Activated B cell treated with CpG ODN at 0.5 μM for 24 hours (primary cell): ENCODE measurements at regions of chr9 and their contacts with region 1.

Region 1: GRCh38 chr9:38432922-38433510 is 8.8 kb upstream of the IGFBPL1 start:
- DNase-seq: no peak
- ATAC-seq: no peak
- H3K4me3 Mint-ChIP-seq: no peak overlapping the region
- H3K27ac Mint-ChIP-seq: no peak overlapping the region
- H3K4me1 Mint-ChIP-seq: peaks cover 2% of the 10 kb centered on the region
- H3K27me3 Mint-ChIP-seq: peaks cover 15% of the 10 kb centered on the region
- CTCF ChIP-seq: peak; percentile 30

Region 2: GRCh38 chr9:38339087-38339486 is 93.9 kb before region 1 on chr9:
- CTCF ChIA-PET with region 1: no interaction called
- POLR2A ChIA-PET with region 1: no interaction called
- intact Hi-C with region 1: no loop called
- DNase-seq: no peak
- ATAC-seq: no peak
- H3K4me3 Mint-ChIP-seq: no peak overlapping the region
- H3K27ac Mint-ChIP-seq: no peak overlapping the region
- H3K4me1 Mint-ChIP-seq: no peaks in the 10 kb centered on the region
- H3K27me3 Mint-ChIP-seq: peaks cover 10% of the 10 kb centered on the region
- CTCF ChIP-seq: no peak

Region 3: DNA sequence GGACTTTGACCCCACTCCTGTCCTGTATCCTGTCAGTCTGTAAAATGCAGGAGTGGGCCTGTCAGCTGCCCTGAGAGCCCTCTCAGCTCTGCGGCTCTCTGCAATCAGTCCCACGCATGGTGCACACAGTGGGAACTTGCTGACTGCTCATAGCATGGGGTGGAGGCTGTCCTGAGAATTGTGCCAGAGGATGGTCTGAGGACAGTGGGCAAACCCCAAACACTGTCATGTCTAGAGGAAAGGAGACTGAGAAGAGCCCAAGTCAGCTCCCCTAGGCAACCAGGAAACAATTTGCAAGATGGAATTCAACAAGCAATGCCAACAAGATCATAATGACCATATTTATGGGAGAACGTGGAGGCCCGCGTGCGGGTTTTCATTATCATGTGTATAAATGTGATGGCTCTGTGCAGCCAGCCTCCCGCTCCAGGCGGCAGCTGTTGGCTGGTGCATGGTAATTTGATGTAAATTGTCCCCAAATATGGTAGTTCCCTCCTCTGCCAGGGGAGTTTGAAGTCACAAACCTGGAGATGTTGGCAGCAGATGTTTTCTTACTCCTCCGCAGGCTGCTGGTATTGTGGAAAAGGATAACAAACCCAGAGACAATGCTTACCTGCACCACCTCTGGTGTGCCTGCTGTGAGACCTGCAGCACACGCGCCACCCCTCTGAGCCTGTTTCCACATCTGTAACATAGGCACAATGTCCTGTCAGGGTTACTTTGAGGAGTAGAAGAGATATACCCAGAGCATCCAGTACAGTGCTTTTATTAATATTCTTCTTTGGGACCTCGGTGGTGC is 80.3 kb before region 1 on chr9:
- CTCF ChIA-PET with region 1: no interaction called
- POLR2A ChIA-PET with region 1: no interaction called
- intact Hi-C with region 1: no loop called
- DNase-seq: no peak
- ATAC-seq: no peak
- H3K4me3 Mint-ChIP-seq: no peak overlapping the region
- H3K27ac Mint-ChIP-seq: no peak overlapping the region
- H3K4me1 Mint-ChIP-seq: no peaks in the 10 kb centered on the region
- H3K27me3 Mint-ChIP-seq: peaks cover 11% of the 10 kb centered on the region
- CTCF ChIP-seq: no peak

Region 4: GRCh38 chr9:38371495-38371894 is 61.5 kb before region 1 on chr9:
- CTCF ChIA-PET with region 1: no interaction called
- POLR2A ChIA-PET with region 1: no interaction called
- intact Hi-C with region 1: loop called (anchors 2 kb)
- DNase-seq: no peak
- ATAC-seq: peak; percentile 45
- H3K4me3 Mint-ChIP-seq: no peak overlapping the region
- H3K27ac Mint-ChIP-seq: no peak overlapping the region
- H3K4me1 Mint-ChIP-seq: no peaks in the 10 kb centered on the region
- H3K27me3 Mint-ChIP-seq: peaks cover 14% of the 10 kb centered on the region
- CTCF ChIP-seq: no peak

Region 5: DNA sequence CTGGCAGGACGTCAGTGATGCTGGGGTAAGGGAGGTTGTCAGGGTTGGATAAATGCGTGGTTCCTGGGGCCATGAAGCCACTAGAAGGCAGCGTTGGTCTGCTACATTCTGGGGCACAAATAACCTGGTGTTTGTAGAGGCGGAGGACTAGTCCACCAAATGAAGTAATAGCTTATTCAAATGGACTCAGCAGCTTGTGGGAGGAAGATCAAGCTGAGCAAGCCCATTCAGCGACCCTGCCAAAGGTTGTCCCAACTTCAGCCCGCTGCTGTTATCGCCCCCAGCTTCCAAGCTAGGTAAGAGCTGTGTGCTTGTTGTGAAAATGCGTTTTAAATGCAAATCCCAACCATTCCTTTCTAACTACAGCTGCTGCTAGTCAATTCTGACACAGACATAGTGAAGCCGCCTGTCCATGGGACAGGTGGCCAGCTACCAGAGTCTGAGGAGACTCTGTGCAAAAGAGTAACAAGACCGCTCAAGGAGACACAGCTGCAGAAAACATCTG is 294.5 kb after region 1 on chr9:
- CTCF ChIA-PET with region 1: no interaction called
- POLR2A ChIA-PET with region 1: no interaction called
- intact Hi-C with region 1: no loop called
- DNase-seq: no peak
- ATAC-seq: no peak
- H3K4me3 Mint-ChIP-seq: no peak overlapping the region
- H3K27ac Mint-ChIP-seq: no peak overlapping the region
- H3K4me1 Mint-ChIP-seq: no peaks in the 10 kb centered on the region
- H3K27me3 Mint-ChIP-seq: no peaks in the 10 kb centered on the region
- CTCF ChIP-seq: no peak